ENCODE measurements at regions of chr10 and their contacts with region 1.

Region 1: DNA sequence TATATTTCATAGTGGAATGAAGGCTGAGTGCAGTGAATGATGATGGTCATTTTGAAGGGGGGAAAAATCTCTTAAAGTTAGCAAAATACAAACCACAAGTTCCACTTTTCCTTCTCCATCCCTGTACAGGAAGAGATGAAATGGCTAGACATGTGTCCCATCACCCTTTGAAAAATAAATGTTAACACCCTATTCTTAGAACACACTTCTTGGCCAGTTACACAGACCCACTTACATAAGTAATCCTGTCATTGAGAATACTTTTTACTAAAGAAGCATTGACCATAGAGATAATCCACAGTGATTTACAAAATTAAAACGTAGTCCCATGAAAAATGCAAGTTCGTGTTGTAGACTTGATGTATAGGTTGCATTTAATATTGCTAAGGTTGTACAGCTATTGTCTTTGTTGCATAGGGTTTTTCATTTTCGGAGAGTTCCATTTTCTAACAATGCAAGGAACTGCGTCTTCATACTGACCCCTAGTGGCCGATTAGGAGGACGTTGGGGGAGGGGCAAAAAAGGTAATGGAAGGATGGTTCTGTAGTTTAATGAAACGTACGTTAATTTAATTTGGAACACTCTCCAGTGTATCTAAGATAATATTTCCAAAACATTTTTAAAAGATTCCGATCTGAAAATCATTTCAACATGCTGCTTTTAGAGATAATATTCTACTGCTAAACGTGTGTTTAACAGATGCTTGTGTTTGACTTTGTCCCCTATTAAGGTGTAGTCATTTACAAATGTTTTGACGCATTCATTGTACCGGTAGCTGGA is 60.9 kb downstream of the ARMC3 start:
- DNase-seq: peak; percentile 48 to 89
- ATAC-seq: peak; percentile 87 to 95 (median 90)
- H3K4me3 ChIP-seq: no peak overlapping the region
- H3K4me3 Mint-ChIP-seq: no peak overlapping the region
- H3K27ac ChIP-seq: no peak overlapping the region
- H3K27ac Mint-ChIP-seq: no peak overlapping the region
- H3K4me1 ChIP-seq: no peaks in the 10 kb centered on the region
- H3K4me1 Mint-ChIP-seq: peaks cover 4 to 6% of the 10 kb centered on the region in 2 donors
- H3K27me3 ChIP-seq: no peaks in the 10 kb centered on the region
- H3K27me3 Mint-ChIP-seq: peaks cover 11 to 16% of the 10 kb centered on the region in 2 donors
- CTCF ChIP-seq: peak; percentile 90

Region 2: DNA sequence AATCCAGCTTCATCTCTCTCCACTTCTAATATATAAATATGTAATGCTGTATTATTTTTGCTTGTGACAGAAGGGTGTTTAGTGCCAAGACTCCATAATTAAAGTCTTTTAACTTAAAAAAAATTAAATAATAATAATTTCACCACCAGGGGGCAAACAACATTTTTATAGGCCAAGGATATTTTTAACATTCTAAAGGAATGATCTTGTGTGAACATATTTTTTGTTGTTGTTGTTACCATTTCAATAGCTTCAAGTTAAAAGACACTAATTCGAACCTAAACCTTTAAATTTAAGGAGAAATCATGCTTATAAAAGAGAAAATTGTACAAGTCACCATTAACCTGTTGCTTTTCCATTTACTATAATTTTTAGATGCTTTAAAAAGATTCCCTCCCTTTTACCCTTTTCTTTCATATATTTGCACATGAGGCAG is 977.8 kb before region 1 on chr10:
- intact Hi-C with region 1: loop called (anchors 2 kb)
- DNase-seq: peak in 1 of 2 donors; percentile 54
- ATAC-seq: no peak
- H3K4me3 ChIP-seq: no peak overlapping the region
- H3K4me3 Mint-ChIP-seq: no peak overlapping the region
- H3K27ac ChIP-seq: no peak overlapping the region
- H3K27ac Mint-ChIP-seq: no peak overlapping the region
- H3K4me1 ChIP-seq: no peaks in the 10 kb centered on the region
- H3K4me1 Mint-ChIP-seq: no peaks in the 10 kb centered on the region
- H3K27me3 ChIP-seq: no peaks in the 10 kb centered on the region
- H3K27me3 Mint-ChIP-seq: peaks cover 6 to 23% of the 10 kb centered on the region in 2 donors
- CTCF ChIP-seq: peak; percentile 80

Region 3: DNA sequence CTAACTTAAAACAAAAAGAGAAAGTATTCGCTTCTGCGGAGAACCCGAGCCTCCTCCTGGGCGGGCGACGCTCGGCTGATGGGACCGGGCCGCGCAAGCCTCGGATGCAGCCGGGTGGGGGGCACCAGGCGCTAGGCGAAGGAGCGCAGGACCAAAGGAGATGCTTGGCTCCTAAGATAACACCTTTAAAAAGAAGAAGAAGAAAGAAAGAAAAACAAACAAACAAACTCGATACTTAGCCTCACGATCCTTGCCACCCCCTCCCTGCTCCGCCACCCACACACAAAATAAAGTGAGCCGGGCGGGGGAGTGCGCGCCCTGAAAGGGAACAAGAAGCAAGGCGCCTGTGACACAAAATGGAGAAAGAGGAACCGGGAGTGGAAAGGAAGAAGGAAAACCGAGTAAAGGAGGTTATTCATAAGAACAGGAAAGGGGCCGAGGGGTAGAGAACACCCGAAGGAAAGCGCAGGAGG is 737.0 kb before region 1 on chr10:
- intact Hi-C with region 1: loop called (anchors 10 kb)
- DNase-seq: peak; percentile 34 to 81
- ATAC-seq: peak; percentile 61 to 68 (median 67)
- H3K4me3 ChIP-seq: peak overlapping the region; percentile 83
- H3K4me3 Mint-ChIP-seq: peak overlapping the region; percentile 98
- H3K27ac ChIP-seq: peak overlapping the region; percentile 96
- H3K27ac Mint-ChIP-seq: peak overlapping the region; percentile 74 to 85
- H3K4me1 ChIP-seq: peaks cover 19% of the 10 kb centered on the region
- H3K4me1 Mint-ChIP-seq: peaks cover 17 to 23% of the 10 kb centered on the region in 2 donors
- H3K27me3 ChIP-seq: peaks cover 19% of the 10 kb centered on the region
- H3K27me3 Mint-ChIP-seq: peaks cover 34 to 49% of the 10 kb centered on the region in 2 donors
- CTCF ChIP-seq: no peak

Region 4: DNA sequence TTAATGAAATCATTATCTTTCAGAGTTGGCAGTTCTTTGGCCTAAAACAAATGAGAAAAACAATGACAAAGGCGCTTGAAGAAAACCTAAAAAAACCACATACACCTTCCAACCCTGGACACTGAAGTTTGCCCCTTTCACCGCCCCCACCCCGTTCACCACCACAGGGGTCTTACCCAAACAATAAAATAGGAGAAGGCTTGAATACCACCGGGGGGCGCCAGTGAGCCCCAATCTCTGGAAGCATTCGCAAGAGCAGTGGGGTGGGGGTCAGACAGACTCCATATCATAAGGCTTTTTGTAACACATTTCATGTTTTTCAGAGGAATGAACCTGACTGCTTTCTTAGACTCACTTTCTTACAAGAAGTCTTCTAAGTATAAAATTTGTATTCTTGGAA is 438.0 kb before region 1 on chr10:
- intact Hi-C with region 1: loop called (anchors 1 kb)
- DNase-seq: peak; percentile 68 to 81
- ATAC-seq: peak in 2 of 3 donors; percentile 77 to 78
- H3K4me3 ChIP-seq: no peak overlapping the region
- H3K4me3 Mint-ChIP-seq: no peak overlapping the region
- H3K27ac ChIP-seq: no peak overlapping the region
- H3K27ac Mint-ChIP-seq: peak overlapping the region; percentile 73 to 87
- H3K4me1 ChIP-seq: peaks cover 6% of the 10 kb centered on the region
- H3K4me1 Mint-ChIP-seq: peaks cover 32 to 43% of the 10 kb centered on the region in 2 donors
- H3K27me3 ChIP-seq: no peaks in the 10 kb centered on the region
- H3K27me3 Mint-ChIP-seq: no peaks in the 10 kb centered on the region
- CTCF ChIP-seq: peak; percentile 75

Region 5: DNA sequence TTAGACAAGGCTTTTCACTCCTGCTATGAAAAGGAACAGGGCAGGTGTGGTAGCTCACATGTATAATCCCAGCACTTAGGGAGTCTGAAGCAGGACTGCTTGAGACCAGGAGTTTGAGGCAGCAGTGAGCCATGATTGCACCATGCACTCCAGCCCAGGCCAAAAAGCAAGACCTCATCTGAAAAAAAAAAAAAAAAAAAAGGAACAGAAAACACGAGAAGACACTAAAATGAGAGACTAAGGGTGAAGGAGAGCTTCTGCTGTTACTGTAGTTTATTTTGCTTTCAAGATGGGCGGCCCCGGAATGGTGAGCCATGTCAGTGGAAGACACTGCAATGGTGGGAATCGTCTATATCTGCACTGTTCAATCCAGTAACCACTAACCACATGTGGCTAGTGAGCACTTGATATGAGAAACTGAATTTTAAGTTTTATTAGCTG is 284.3 kb before region 1 on chr10:
- intact Hi-C with region 1: loop called (anchors 10 kb)
- DNase-seq: peak in 1 of 2 donors; percentile 18
- ATAC-seq: no peak
- H3K4me3 ChIP-seq: no peak overlapping the region
- H3K4me3 Mint-ChIP-seq: peak overlapping the region; percentile 87
- H3K27ac ChIP-seq: peak overlapping the region; percentile 61
- H3K27ac Mint-ChIP-seq: peak overlapping the region; percentile 82 to 87
- H3K4me1 ChIP-seq: peaks cover 74% of the 10 kb centered on the region
- H3K4me1 Mint-ChIP-seq: peaks cover 99% of the 10 kb centered on the region in 2 donors
- H3K27me3 ChIP-seq: no peaks in the 10 kb centered on the region
- H3K27me3 Mint-ChIP-seq: no peaks in the 10 kb centered on the region
- CTCF ChIP-seq: no peak